Activated CD4-positive, alpha-beta memory T cell treated with anti-CD3 and anti-CD28 coated beads, Interleukin-2, amount 10 ng/mL, durations not matched to agents 7 days and 5 days (primary cell): ENCODE measurements at regions of chr19 and their contacts with region 1.

Region 1: DNA sequence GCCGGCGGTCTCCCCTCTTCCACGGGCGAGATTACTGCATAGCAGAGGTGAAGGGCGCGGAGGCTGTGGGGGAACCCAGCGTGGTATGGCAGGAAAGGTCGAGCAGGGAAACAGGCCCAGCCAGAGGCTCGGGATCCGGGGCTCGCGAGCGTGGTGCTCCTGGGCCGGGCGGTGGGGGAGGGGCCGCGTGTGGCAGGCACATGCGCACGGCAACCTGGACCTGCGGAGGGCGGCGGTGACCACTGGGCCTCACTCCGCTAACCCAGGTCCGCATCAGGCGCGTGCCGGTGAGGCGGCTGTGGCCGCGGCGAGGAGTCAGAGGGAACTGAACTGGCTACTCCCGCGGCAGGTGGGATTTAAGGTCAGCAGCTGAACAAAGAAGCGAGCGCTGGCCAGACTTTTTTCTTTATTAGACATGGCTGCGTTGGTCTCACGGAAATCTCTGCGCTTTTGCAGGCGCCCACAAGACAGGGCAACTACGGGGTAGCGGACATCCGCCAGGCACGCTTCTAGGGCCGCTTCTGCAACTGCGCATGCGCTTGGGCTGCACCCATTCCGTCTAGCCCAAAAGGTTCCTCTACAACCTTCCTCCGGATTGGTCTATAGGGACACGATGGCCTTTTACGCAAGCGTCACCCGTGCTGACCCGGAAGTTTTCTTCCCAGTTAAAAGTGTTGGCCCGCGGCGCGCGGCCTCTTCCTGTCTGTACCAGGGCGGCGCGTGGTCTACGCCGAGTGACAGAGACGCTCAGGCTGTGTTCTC is at the start of gene RPS5:
- DNase-seq: peak; percentile 96
- H3K4me3 Mint-ChIP-seq: peak within 1 kb of the TSS; percentile 95
- H3K27ac Mint-ChIP-seq: peak within 1 kb of the TSS; percentile 96
- H3K4me1 Mint-ChIP-seq: peaks cover 46% of the 10 kb centered on the region
- H3K27me3 Mint-ChIP-seq: no peaks in the 10 kb centered on the region
- total RNA-seq, gene RPS5: 785 to 801 TPM

Region 2: DNA sequence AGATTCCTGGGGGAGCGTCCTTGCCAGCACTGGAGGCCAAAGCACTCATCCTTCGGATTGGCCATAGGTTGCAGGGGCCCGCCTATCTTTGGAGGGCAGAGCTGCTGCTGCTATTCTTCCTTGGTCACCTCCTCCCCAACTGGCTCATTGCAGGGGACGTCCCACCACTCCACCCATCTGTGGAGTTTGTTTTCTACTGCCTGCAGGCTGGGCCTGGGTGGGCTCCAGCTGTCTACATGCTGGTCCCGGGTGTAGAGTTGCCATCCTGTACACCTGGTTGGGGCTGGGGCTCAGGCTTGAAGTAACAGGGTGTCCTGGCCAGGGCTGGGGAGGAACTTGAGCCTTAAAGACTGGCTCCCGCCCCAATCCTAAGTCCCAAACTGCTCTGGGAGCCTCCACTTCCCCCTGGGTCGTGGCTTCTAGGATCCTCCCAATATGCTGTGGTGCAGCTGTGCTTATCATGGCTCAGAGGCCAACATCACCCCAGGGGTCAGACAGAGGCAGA is 10.8 kb after region 1 on chr19:
- CTCF ChIA-PET with region 1: no interaction called
- POLR2A ChIA-PET with region 1: interaction called, 10 read pairs
- DNase-seq: no peak
- H3K4me3 Mint-ChIP-seq: no peak overlapping the region
- H3K27ac Mint-ChIP-seq: no peak overlapping the region
- H3K4me1 Mint-ChIP-seq: peaks cover 38% of the 10 kb centered on the region
- H3K27me3 Mint-ChIP-seq: no peaks in the 10 kb centered on the region

Region 3: GRCh38 chr19:58416604-58417003 is 29.8 kb after region 1 on chr19:
- CTCF ChIA-PET with region 1: no interaction called
- POLR2A ChIA-PET with region 1: no interaction called
- DNase-seq: no peak
- H3K4me3 Mint-ChIP-seq: no peak overlapping the region
- H3K27ac Mint-ChIP-seq: no peak overlapping the region
- H3K4me1 Mint-ChIP-seq: no peaks in the 10 kb centered on the region
- H3K27me3 Mint-ChIP-seq: no peaks in the 10 kb centered on the region